Activated CD8-positive, alpha-beta T cell treated with anti-CD3 and anti-CD28 coated beads for 36 hours (primary cell): ENCODE measurements at regions of chr6 and their contacts with region 1.

Region 1: DNA sequence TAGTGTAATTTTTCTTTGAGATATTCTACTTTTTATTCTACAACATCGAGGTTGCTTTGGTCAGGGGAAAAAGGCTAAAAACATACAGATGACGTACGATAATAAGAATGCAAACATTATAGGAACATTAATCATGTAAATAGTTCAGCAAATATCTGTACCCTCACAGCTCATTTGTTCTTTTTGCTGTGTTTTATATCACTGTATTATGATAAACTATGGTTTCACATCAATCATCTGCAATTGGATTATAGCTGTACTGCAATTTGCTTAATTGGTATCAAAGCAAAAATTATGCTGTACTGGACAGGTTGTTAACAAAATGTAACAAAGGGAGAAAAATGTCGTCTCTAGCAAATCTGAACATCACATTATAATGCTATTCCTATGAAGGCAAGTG is 597.1 kb downstream of the EPHA7 start:
- DNase-seq: no peak
- ATAC-seq: no peak
- H3K4me3 Mint-ChIP-seq: no peak overlapping the region
- H3K27ac Mint-ChIP-seq: no peak overlapping the region
- H3K4me1 Mint-ChIP-seq: no peaks in the 10 kb centered on the region
- H3K27me3 Mint-ChIP-seq: no peaks in the 10 kb centered on the region
- CTCF ChIP-seq: no peak

Region 2: GRCh38 chr6:92810913-92811312 is 11.3 kb before region 1 on chr6:
- CTCF ChIA-PET with region 1: interaction called, 10 read pairs
- POLR2A ChIA-PET with region 1: no interaction called
- intact Hi-C with region 1: no loop called
- DNase-seq: peak; percentile 20
- ATAC-seq: peak; percentile 56
- H3K4me3 Mint-ChIP-seq: no peak overlapping the region
- H3K27ac Mint-ChIP-seq: no peak overlapping the region
- H3K4me1 Mint-ChIP-seq: no peaks in the 10 kb centered on the region
- H3K27me3 Mint-ChIP-seq: no peaks in the 10 kb centered on the region
- CTCF ChIP-seq: peak; percentile 15